IMR-90 (cell line): ENCODE measurements at regions of chr19 and their contacts with region 1.

Region 1: DNA sequence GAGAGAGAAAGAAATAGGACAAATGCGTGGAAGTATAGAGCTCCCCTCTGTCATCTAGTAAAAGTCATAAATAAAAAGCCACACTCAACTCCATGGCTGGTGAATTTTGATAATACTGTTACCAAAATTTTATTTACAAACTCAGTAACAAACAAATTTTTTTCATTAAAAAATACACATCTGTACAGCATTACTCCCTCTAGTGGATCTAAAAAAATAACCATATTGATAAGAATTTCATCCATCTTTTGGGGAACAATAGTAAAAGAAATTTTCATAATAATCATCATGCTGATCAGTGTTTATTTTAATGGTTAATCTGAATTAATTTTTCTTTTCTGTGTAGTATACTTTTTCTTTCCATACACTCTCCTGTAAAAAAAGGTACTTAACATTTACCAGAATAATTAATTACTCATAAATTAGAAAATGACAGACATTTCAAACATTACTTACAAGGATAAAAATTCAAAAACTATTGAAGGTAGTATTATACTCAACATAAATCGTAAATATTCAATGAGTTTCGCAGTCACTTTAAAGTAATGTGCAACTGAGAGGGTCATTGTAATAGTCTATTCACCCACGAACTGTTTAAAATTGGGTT is 173.5 kb upstream of the LSM14A start:
- DNase-seq: no peak
- ATAC-seq: no peak
- H3K4me3 ChIP-seq: no peak overlapping the region
- H3K27ac ChIP-seq: no peak overlapping the region
- H3K4me1 ChIP-seq: no peaks in the 10 kb centered on the region
- H3K27me3 ChIP-seq: no peaks in the 10 kb centered on the region; the same call in none of the 2 replicates
- CTCF ChIP-seq: peak; percentile 43
- POLR2A ChIP-seq: no peak
- RAD21 ChIP-seq: peak; percentile 28; the same call in 1 of the 2 replicates

Region 2: DNA sequence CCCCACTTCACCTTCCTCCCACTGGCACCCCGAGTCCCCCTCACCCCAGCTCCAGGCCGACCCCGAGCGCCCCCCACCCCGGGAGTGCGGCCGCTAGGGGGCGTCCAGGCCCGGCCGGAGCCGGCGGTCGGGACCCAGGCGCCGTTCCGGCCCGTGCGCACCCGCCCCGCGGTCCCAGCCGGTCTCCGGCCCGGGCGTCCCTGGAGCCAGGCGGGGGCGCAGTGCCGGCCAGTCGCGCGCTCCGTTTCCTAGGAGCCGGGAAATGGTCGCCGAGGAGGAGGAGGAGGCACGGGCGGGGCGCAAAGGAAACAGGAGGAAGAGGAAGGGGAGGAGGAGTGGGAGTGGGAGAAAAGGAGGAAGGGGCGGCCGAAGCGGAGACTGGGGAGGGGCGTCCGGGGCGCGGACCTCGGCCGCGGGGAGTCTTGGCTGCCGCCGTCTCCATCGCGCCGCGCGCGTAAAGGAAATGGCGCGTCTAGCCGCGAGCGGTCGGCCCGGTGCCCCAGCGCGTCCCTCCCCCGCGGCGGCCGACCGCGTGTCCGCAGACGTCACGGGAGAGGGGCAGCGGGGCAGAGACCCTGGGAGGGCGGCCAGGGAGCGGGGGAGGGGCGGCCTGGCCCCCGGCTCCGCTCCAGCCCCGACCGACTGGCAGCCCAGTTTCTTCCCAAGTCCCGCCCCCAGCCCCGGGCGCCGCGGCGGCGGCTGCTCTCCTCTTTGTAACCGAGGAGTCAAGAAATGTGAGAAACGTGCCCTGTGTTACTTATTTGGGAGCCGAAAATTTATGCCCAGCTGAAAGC is 203.3 kb before region 1 on chr19:
- CTCF ChIA-PET with region 1: interaction called, 3 read pairs
- POLR2A ChIA-PET with region 1: no interaction called
- dilution Hi-C with region 1: no loop called
- in situ Hi-C with region 1: no loop called
- intact Hi-C with region 1: loop called (anchors 5 kb)
- DNase-seq: peak; percentile 75
- ATAC-seq: peak; percentile 74
- H3K4me3 ChIP-seq: peak overlapping the region; percentile 63
- H3K27ac ChIP-seq: peak overlapping the region; percentile 83
- H3K4me1 ChIP-seq: peaks cover 2% of the 10 kb centered on the region; the same call in 1 of the 2 replicates
- H3K27me3 ChIP-seq: peaks cover 9% of the 10 kb centered on the region
- CTCF ChIP-seq: peak; percentile 68
- POLR2A ChIP-seq: peak; percentile 73; the same call in 1 of the 2 replicates
- RAD21 ChIP-seq: peak; percentile 37